Activated B cell treated with CpG ODN at 0.5 μM for 24 hours (primary cell): ENCODE measurements at regions of chr4 and their contacts with region 1.

Region 1: GRCh38 chr4:83197555-83198235 is 83.2 kb upstream of the PLAC8 start:
- DNase-seq: no peak
- ATAC-seq: peak; percentile 87
- H3K4me3 Mint-ChIP-seq: peak overlapping the region; percentile 28
- H3K27ac Mint-ChIP-seq: peak overlapping the region; percentile 74
- H3K4me1 Mint-ChIP-seq: peaks cover 39% of the 10 kb centered on the region
- H3K27me3 Mint-ChIP-seq: no peaks in the 10 kb centered on the region
- CTCF ChIP-seq: no peak

Region 2: GRCh38 chr4:83043801-83044407 is 153.8 kb before region 1 on chr4:
- CTCF ChIA-PET with region 1: no interaction called
- POLR2A ChIA-PET with region 1: no interaction called
- intact Hi-C with region 1: no loop called
- DNase-seq: no peak
- ATAC-seq: no peak
- H3K4me3 Mint-ChIP-seq: no peak overlapping the region
- H3K27ac Mint-ChIP-seq: no peak overlapping the region
- H3K4me1 Mint-ChIP-seq: peaks cover 13% of the 10 kb centered on the region
- H3K27me3 Mint-ChIP-seq: no peaks in the 10 kb centered on the region
- CTCF ChIP-seq: no peak

Region 3: DNA sequence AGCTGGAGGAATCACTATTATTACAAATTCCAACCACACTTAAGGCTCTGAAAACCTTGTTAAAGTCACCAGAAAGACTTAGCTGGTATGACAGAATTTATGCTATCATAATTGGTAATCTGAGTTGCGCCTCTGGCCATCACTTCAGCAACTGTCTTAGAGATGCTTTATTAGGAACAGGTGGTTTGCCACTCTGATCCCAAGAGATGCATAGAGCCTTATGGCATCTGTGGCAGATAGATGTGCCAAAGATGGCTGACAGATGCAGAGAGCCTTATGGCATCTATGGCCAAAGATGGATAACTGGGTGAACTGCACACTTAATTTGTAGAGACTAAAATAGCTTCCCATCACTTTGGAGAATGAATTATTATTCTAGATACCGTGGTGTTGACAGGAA is 50.9 kb before region 1 on chr4:
- CTCF ChIA-PET with region 1: no interaction called
- POLR2A ChIA-PET with region 1: no interaction called
- intact Hi-C with region 1: no loop called
- DNase-seq: no peak
- ATAC-seq: no peak
- H3K4me3 Mint-ChIP-seq: no peak overlapping the region
- H3K27ac Mint-ChIP-seq: peak overlapping the region; percentile 73
- H3K4me1 Mint-ChIP-seq: peaks cover 56% of the 10 kb centered on the region
- H3K27me3 Mint-ChIP-seq: no peaks in the 10 kb centered on the region
- CTCF ChIP-seq: no peak

Region 4: GRCh38 chr4:83212041-83212851 is 14.6 kb after region 1 on chr4:
- CTCF ChIA-PET with region 1: no interaction called
- POLR2A ChIA-PET with region 1: interaction called, 15 read pairs
- intact Hi-C with region 1: loop called (anchors 1 kb)
- DNase-seq: no peak
- ATAC-seq: peak; percentile 71
- H3K4me3 Mint-ChIP-seq: peak overlapping the region; percentile 39
- H3K27ac Mint-ChIP-seq: peak overlapping the region; percentile 78
- H3K4me1 Mint-ChIP-seq: peaks cover 86% of the 10 kb centered on the region
- H3K27me3 Mint-ChIP-seq: no peaks in the 10 kb centered on the region
- CTCF ChIP-seq: no peak

Region 5: DNA sequence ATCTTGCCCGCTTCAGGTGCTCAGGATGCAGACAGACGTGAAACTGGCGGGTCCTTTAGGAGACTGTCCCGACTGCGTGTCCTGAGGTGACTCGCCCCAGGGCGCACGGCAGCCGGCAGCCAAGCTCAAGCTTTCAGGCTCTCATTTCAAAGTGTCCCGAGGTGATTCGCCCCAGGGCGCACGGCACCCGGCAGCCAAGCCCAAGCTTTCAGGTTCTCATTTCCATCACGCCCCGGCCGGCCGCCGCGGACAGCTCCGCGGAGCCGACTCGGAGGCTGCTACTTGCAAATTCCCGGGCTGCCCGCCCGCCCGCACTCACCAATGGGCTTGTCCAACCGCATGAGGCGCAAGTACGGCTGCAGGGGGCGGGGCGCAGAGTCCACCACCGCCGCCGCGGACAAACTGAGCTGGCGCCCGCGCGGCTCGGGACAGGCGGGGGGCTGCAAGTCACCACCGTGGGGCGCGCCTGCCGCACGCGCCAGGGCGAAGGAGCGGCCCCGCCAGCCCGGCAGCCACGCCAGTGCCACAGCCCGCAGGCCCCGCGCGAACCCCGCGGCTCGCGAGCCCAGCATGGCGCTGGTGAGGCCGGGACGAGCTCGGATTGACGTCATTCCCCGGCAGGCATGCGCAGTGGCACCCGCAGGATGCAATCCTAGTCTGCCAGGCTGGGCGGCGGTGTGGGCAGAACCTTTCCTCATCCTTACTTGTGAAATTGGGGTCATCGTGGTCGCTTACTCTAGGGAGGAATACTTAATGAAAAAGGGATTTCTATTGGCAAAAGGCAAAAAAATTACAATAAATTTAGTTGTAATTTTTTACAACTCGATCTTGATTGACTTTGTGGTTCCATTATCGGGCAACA is 86.7 kb after region 1 on chr4 and contains the start of gene COQ2:
- CTCF ChIA-PET with region 1: no interaction called
- POLR2A ChIA-PET with region 1: no interaction called
- intact Hi-C with region 1: no loop called
- DNase-seq: peak; percentile 96
- ATAC-seq: peak; percentile 89
- H3K4me3 Mint-ChIP-seq: peak within 1 kb of the TSS; percentile 98
- H3K27ac Mint-ChIP-seq: peak within 1 kb of the TSS; percentile 99
- H3K4me1 Mint-ChIP-seq: peaks cover 35% of the 10 kb centered on the region
- H3K27me3 Mint-ChIP-seq: no peaks in the 10 kb centered on the region
- CTCF ChIP-seq: no peak
- total RNA-seq, gene COQ2: 15.2 and 18.8 TPM in 2 replicates

Region 6: DNA sequence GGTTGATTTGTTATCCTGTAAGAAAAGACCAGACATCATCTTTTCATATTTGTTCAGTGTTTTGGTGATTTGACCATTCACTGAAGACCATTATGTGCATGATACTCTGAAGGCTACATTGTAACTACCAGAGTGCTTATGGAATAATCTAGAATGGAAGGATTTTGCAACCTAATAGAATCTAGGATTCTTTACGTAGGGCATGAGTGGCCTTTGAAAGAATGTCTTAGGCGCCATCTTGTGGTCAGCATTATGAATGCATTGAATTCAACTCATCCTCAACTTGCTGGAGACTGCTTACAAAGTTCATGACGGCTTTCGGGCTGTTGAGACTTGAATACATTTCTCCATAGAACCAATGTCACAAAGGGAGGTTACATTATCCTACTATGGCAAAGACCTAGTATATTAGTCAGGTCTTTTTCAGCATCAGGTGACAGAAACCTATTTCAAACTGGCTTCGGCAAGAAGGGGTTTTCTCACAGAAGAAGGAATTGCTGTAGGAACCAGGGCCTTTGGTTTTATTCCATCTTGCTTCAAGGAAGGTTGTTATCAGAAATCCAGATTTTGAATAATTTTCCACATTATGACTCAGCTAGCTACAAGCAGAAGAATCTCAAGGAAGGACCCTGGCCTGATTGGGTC is 442.3 kb after region 1 on chr4:
- CTCF ChIA-PET with region 1: no interaction called
- POLR2A ChIA-PET with region 1: no interaction called
- intact Hi-C with region 1: no loop called
- DNase-seq: no peak
- ATAC-seq: peak; percentile 62
- H3K4me3 Mint-ChIP-seq: no peak overlapping the region
- H3K27ac Mint-ChIP-seq: no peak overlapping the region
- H3K4me1 Mint-ChIP-seq: peaks cover 2% of the 10 kb centered on the region
- H3K27me3 Mint-ChIP-seq: peaks cover 9% of the 10 kb centered on the region
- CTCF ChIP-seq: no peak